ENCODE measurements at regions of chr2 and their contacts with region 1.

Region 1: GRCh38 chr2:67476809-67477790 is 80.0 kb downstream of the ETAA1 start:
- DNase-seq: peak; percentile 41
- H3K4me3 ChIP-seq: no peak overlapping the region
- H3K27ac ChIP-seq: no peak overlapping the region
- H3K4me1 ChIP-seq: no peaks in the 10 kb centered on the region
- H3K27me3 ChIP-seq: no peaks in the 10 kb centered on the region
- CTCF ChIP-seq: peak; percentile 52 to 72

Region 2: DNA sequence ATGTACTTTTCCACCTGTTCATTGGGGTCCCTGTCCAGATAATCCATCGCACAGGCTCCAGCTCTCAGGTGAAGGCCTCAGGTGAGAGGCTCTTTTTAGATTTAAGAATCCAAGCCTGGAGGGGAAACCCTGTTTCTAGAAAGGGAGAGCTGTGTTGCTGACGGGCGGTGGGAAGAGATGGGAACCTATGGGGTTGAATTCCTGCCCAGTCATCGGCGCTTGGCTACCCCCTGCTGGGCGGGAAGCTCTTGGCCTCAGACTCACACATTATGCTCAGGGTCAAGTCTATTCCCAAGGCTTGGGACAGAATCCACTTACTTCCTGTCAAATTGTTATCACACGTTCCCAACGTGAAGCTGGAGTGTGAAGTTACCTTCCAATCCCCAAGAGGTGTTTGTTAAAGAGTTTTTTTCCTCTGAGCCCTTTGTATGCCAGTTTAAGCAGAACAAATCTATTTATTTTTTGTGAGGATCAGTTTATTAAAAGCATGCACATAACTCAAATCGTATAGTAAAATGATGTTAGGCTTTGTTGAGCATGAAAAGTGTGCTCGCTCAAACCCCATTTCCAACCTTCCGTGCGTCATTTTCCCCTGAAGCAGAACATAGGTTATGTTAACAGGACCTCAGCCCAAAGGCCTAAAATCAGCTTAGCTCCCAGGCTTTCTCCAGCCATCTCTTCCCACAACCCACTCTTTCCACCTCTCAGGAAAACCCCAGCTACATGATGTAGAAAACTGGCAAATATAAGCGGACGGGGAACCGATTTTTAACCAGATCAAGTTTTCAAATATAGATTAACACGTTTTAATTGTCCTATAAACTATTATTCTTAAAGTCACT is 261.7 kb before region 1 on chr2:
- CTCF ChIA-PET with region 1: no interaction called
- dilution Hi-C with region 1: no loop called
- in situ Hi-C with region 1: no loop called
- intact Hi-C with region 1: loop called (anchors 5 kb)
- DNase-seq: peak; percentile 46
- H3K4me3 ChIP-seq: no peak overlapping the region
- H3K27ac ChIP-seq: no peak overlapping the region
- H3K4me1 ChIP-seq: no peaks in the 10 kb centered on the region
- H3K27me3 ChIP-seq: no peaks in the 10 kb centered on the region
- CTCF ChIP-seq: peak; percentile 49 to 71

Region 3: GRCh38 chr2:67234439-67234838 is 242.7 kb before region 1 on chr2:
- CTCF ChIA-PET with region 1: interaction called, 5 read pairs
- dilution Hi-C with region 1: no loop called
- in situ Hi-C with region 1: no loop called
- intact Hi-C with region 1: loop called (anchors 1 kb)
- DNase-seq: peak; percentile 17
- H3K4me3 ChIP-seq: no peak overlapping the region
- H3K27ac ChIP-seq: no peak overlapping the region
- H3K4me1 ChIP-seq: no peaks in the 10 kb centered on the region
- H3K27me3 ChIP-seq: no peaks in the 10 kb centered on the region
- CTCF ChIP-seq: peak in 1 of 2 donors; percentile 53

Region 4: GRCh38 chr2:67516899-67517530 is 39.9 kb after region 1 on chr2:
- CTCF ChIA-PET with region 1: no interaction called
- dilution Hi-C with region 1: no loop called
- in situ Hi-C with region 1: no loop called
- intact Hi-C with region 1: no loop called
- DNase-seq: no peak
- H3K4me3 ChIP-seq: no peak overlapping the region
- H3K27ac ChIP-seq: no peak overlapping the region
- H3K4me1 ChIP-seq: no peaks in the 10 kb centered on the region
- H3K27me3 ChIP-seq: no peaks in the 10 kb centered on the region
- CTCF ChIP-seq: no peak

Measured in mammary epithelial cell (primary cell).